ENCODE measurements at regions of chr11 and their contacts with region 1.

Region 1: GRCh38 chr11:47269002-47269828 is 718 bp upstream of the MADD start:
- DNase-seq: peak; percentile 91
- H3K4me3 Mint-ChIP-seq: peak overlapping the region; percentile 85
- H3K27ac Mint-ChIP-seq: peak overlapping the region; percentile 98
- H3K4me1 Mint-ChIP-seq: peaks cover 55% of the 10 kb centered on the region
- H3K27me3 Mint-ChIP-seq: no peaks in the 10 kb centered on the region

Region 2: GRCh38 chr11:46675288-46675851 is 593.8 kb before region 1 on chr11:
- CTCF ChIA-PET with region 1: no interaction called
- intact Hi-C with region 1: no loop called
- DNase-seq: no peak
- H3K4me3 Mint-ChIP-seq: no peak overlapping the region
- H3K27ac Mint-ChIP-seq: peak overlapping the region; percentile 48
- H3K4me1 Mint-ChIP-seq: peaks cover 65% of the 10 kb centered on the region
- H3K27me3 Mint-ChIP-seq: no peaks in the 10 kb centered on the region

Region 3: DNA sequence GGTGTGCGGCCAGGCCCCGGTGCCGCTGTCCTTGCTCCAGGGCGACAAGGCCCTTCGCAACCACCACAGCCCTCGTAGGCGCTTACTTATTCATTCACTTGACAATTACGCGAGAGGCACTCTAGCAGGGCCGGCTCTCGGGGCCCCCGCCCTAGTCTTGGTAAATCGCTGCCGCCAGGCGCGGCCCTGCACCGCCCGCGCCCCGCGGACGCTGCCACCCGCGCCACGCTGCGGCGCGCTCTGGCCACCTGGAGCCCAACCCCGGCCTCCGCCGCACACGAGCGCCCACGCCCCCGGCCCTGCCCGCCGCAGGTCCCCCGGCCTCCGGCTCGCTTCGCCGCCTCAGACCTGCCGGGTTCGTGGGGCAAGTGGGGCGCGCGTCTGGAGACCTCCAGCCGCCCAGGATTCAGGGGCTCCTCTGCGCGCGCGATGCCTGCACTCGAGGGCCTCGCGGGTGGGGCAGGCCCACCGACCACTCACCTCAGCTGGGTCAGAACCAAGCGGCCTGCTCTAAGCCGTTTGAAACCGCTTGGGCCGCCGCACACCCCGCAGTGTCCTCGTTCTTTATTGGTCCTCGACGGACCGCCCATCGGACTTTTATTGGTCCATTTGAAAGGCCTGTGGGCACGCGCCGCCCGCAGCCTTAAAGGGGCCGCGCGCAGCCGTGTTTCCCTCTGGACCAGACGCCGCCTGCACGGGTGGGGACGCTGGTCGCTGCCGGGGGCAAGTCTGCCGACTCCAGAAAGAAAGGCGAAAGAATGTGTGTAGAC is 423.3 kb before region 1 on chr11 and contains the start of gene CKAP5:
- CTCF ChIA-PET with region 1: no interaction called
- intact Hi-C with region 1: loop called (anchors 10 kb)
- DNase-seq: peak; percentile 91
- H3K4me3 Mint-ChIP-seq: peak within 1 kb of the TSS; percentile 95
- H3K27ac Mint-ChIP-seq: peak within 1 kb of the TSS; percentile 91
- H3K4me1 Mint-ChIP-seq: peaks cover 33% of the 10 kb centered on the region
- H3K27me3 Mint-ChIP-seq: no peaks in the 10 kb centered on the region
- total RNA-seq, gene CKAP5: 205 to 216 TPM

Region 4: GRCh38 chr11:47143322-47143721 is 125.9 kb before region 1 on chr11:
- CTCF ChIA-PET with region 1: no interaction called
- intact Hi-C with region 1: no loop called
- DNase-seq: no peak
- H3K4me3 Mint-ChIP-seq: no peak overlapping the region
- H3K27ac Mint-ChIP-seq: no peak overlapping the region
- H3K4me1 Mint-ChIP-seq: no peaks in the 10 kb centered on the region
- H3K27me3 Mint-ChIP-seq: no peaks in the 10 kb centered on the region

Region 5: GRCh38 chr11:47154616-47155570 is 114.3 kb before region 1 on chr11:
- CTCF ChIA-PET with region 1: no interaction called
- intact Hi-C with region 1: no loop called
- DNase-seq: peak; percentile 31
- H3K4me3 Mint-ChIP-seq: no peak overlapping the region
- H3K27ac Mint-ChIP-seq: no peak overlapping the region
- H3K4me1 Mint-ChIP-seq: peaks cover 29% of the 10 kb centered on the region
- H3K27me3 Mint-ChIP-seq: no peaks in the 10 kb centered on the region

Region 6: DNA sequence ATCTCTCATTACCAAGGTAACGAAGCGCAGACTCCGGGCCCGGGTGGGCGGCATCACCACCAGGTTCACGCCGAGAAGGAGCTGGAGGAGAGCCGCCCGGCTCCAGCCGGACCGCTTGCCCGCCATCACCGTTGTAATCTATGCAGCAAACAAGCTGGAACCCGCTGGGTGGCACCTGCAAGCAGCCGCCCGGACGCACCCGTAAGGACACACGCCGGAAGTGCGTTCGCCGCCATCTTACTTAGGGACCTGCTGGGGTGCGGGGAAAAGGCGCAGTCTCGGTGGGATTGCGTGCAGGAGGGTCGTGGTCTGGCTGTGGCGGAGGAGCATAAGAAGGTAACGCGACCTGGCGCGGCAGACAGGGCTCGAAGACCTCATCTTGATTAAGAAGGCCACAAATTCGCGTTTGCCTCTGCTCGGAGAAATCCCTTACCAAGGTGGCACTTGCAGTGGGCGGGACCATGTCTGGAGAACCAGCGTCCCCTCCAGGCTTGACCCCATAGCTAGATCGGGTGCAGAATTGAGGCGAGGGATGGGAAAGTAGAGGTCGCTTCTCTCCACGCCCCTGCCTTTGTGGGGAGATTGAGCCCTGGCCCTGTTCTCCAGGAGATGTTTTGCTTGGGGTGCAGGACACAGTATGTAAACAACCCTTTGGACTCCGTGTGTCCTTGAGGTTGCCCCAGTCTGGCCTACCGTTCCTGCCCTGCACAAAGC is 20.4 kb before region 1 on chr11 and contains the start of gene ACP2:
- CTCF ChIA-PET with region 1: interaction called, 5 read pairs
- intact Hi-C with region 1: loop called (anchors 1 kb)
- DNase-seq: peak; percentile 94
- H3K4me3 Mint-ChIP-seq: peak within 1 kb of the TSS; percentile 99
- H3K27ac Mint-ChIP-seq: peak within 1 kb of the TSS; percentile 97
- H3K4me1 Mint-ChIP-seq: peaks cover 24% of the 10 kb centered on the region
- H3K27me3 Mint-ChIP-seq: no peaks in the 10 kb centered on the region
- total RNA-seq, gene ACP2: 8.0 to 9.3 TPM

Region 7: DNA sequence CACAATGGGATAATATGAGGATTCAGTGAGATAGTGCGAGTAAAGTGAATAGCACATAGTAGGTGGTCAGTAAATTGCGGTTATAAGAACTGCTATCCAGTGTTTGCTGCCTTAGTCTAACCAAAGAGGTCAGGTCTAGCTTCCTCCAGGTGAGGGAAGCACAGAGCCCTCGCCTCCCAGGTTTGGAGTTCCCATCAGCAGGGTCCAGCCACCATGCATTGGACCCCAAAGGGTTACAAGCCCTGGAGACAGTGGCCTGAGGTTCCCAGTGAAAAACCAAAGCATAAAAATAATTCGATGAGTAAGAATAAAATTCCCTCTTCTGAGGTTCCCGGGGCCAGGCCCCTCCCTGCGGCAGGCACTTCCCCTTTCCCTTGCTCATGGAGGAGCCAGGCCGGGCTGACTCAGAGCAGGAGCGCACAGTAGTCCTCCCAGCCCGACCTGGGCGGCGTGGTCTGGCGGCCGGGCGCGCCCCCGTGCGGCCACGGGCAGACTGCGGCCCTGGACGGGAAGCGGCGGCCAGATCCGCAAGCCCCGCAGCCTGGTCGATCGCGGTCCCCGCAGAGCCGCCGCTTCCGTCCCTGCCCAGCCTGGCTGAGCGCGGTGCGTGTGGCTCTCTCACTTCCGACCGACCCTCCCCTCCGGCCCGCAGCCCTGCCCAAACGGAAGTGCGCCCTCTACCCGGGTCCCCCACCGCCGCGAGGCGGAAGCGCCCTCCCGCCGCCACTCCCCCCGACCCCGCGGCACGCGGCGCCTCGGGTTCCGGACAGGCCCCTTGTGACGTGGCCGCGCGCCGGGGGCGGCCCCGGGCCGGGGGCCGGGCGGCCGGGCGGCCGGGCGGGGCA is 138.8 kb after region 1 on chr11 and contains the start of gene SLC39A13:
- CTCF ChIA-PET with region 1: interaction called, 4 read pairs
- intact Hi-C with region 1: loop called (anchors 1 kb)
- DNase-seq: peak; percentile 91
- H3K4me3 Mint-ChIP-seq: peak within 1 kb of the TSS; percentile 92
- H3K27ac Mint-ChIP-seq: peak within 1 kb of the TSS; percentile 92
- H3K4me1 Mint-ChIP-seq: peaks cover 25% of the 10 kb centered on the region
- H3K27me3 Mint-ChIP-seq: no peaks in the 10 kb centered on the region
- total RNA-seq, gene SLC39A13: 9.2 TPM

Region 8: GRCh38 chr11:47454180-47454644 is 185.0 kb after region 1 on chr11:
- CTCF ChIA-PET with region 1: no interaction called
- intact Hi-C with region 1: loop called (anchors 5 kb)
- DNase-seq: peak; percentile 85
- H3K4me3 Mint-ChIP-seq: no peak overlapping the region
- H3K27ac Mint-ChIP-seq: no peak overlapping the region
- H3K4me1 Mint-ChIP-seq: peaks cover 2% of the 10 kb centered on the region
- H3K27me3 Mint-ChIP-seq: no peaks in the 10 kb centered on the region

Region 9: DNA sequence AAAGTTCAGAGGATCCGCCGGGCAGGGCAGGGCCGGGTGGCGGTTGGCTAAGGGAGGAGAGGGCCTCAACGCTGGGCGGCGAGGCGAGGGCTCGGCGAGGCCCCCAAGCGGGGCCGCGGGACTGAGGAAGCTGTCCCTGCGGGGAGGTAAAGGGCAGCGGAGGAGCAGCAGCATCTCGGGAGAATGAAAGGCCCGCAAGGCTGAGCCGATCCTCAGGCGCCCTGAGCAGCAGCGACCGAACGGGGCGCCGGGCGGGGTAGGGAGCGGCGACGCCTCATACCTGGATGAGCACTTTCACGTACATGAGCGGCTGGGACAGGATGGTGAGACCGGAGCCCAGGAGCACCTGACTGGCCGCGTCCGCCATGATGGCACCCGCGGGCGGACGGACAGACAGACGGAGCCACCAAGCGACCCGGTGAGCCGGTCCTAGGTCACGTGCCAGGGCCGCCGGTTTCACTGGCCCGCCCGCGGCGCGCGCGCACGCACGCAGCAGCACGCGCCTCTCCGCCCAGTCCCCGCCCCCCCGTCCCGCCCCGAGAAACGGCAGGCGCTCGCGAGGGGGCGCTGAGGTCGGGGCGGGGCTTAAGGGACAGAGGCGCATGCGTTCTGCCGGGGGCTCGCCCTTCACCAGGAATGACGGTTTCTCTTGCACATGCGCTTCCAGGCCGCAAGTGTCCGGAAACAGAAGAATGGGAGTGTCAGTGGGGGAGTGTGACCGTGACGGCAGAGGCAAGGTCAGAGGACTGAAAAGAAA is 373.1 kb after region 1 on chr11 and contains the start of gene MTCH2:
- CTCF ChIA-PET with region 1: no interaction called
- intact Hi-C with region 1: loop called (anchors 5 kb)
- DNase-seq: peak; percentile 97
- H3K4me3 Mint-ChIP-seq: peak within 1 kb of the TSS; percentile 91
- H3K27ac Mint-ChIP-seq: peak within 1 kb of the TSS; percentile 81
- H3K4me1 Mint-ChIP-seq: peaks cover 19% of the 10 kb centered on the region
- H3K27me3 Mint-ChIP-seq: no peaks in the 10 kb centered on the region
- total RNA-seq, gene MTCH2: 93.7 to 95.1 TPM

Region 10: GRCh38 chr11:48001438-48002021 is 732.3 kb after region 1 on chr11:
- CTCF ChIA-PET with region 1: no interaction called
- intact Hi-C with region 1: loop called (anchors 10 kb)
- DNase-seq: peak; percentile 89
- H3K4me3 Mint-ChIP-seq: peak overlapping the region; percentile 66
- H3K27ac Mint-ChIP-seq: peak overlapping the region; percentile 96
- H3K4me1 Mint-ChIP-seq: peaks cover 88% of the 10 kb centered on the region
- H3K27me3 Mint-ChIP-seq: no peaks in the 10 kb centered on the region

Measured in activated naive CD4-positive, alpha-beta T cell treated with anti-CD3 and anti-CD28 coated beads for 36 hours (primary cell).